ENCODE measurements at regions of chr10 and their contacts with region 1.

Region 1: GRCh38 chr10:50452603-50453002 is 171.2 kb downstream of the SGMS1 start:
- DNase-seq: no peak
- ATAC-seq: peak; percentile 57
- H3K4me3 ChIP-seq: peak overlapping the region; percentile 7; the same call in 1 of the 2 replicates
- H3K27ac ChIP-seq: peak overlapping the region; percentile 77
- H3K4me1 ChIP-seq: peaks cover 42% of the 10 kb centered on the region
- H3K27me3 ChIP-seq: no peaks in the 10 kb centered on the region
- CTCF ChIP-seq: no peak
- EP300 ChIP-seq: peak; percentile 65 to 67; a peak in 2 of 4 replicates
- POLR2A ChIP-seq: no peak
- RAD21 ChIP-seq: no peak

Region 2: DNA sequence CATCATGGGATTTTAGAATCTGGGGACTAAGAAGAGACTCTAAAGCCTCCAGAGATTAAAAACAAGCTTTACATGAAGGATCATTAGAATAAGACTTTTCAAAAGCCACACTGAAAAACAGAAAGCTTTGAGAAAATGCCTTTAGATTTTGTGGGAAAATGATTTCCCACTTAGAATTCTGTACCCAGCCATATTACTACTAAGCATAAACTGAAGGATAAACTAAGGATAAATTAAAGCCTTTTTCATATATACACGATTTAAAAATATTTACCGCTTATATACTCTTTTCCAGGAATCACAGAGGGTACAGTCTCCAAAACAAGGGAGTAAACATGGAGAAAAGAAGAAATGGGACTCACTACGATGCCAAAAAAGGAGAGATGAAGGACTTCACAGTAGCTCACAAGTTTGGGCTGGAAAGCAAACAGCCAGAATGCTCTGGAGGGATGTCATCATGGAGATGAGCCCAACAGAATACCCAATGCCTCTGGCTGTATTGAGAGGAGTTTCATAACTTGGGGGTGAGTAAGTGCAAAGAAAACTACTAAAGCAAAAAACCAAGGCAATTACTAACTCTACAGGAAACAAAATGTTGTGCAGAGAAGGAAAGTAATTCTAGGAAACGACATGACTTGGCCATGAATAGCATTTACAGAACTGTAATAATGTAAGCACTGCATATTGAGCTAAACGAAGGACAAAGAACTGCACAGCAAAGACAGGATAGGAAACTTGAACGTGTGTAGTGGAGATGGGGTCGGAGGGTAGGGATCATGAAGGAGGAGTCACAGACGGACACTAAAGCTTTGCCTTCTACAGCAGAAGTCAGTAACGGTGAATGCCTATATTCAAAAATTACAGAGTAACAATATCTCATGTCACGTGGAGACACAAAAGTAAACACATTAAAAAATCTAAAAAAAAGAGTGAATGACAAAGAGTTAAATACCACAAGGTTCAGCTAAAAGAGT is 139.9 kb before region 1 on chr10:
- CTCF ChIA-PET with region 1: no interaction called
- POLR2A ChIA-PET with region 1: no interaction called
- RAD21 ChIA-PET with region 1: no interaction called
- SMC1A ChIA-PET with region 1: no interaction called
- in situ Hi-C with region 1: no loop called
- intact Hi-C with region 1: no loop called
- DNase-seq: no peak
- ATAC-seq: no peak
- H3K4me3 ChIP-seq: no peak overlapping the region
- H3K27ac ChIP-seq: no peak overlapping the region
- H3K4me1 ChIP-seq: peaks cover 6% of the 10 kb centered on the region; the same call in 1 of the 2 replicates
- H3K27me3 ChIP-seq: no peaks in the 10 kb centered on the region
- CTCF ChIP-seq: no peak
- EP300 ChIP-seq: no peak
- POLR2A ChIP-seq: no peak
- RAD21 ChIP-seq: no peak

Region 3: DNA sequence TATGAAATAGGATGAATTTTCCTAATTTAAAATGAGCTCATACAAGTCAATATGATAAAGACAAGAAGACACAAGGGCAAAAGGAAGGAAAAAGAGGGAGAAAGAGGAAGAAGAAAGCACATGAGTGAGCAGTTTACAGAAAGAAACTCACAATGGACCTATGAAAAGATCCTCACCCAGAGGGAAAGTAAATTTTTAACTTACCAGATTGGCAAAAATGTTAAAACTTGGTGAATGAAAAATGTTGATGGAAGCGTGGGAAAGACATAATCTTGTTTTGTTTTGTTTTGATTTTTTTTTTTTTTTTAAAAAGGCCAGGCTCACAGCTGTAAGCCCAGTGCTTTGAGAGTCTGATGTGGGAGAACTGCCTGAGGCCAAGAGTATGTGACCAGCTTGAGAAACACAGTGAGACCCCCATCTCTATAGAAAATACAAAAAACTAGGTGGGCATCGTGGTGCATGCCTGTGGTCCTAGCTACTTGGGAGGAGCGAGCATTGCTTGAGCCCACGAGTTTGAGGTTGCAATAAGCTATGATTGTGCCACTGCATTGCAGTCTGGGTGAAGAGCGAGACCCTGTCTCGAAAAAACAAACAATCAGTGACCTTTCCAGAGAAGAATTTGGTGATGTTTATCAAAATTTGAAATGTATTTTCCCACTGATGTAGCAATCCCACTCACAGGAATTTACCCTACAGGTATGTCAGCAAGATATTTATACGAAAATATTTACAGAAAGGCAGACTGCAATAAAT is 48.4 kb before region 1 on chr10:
- CTCF ChIA-PET with region 1: no interaction called
- POLR2A ChIA-PET with region 1: no interaction called
- RAD21 ChIA-PET with region 1: no interaction called
- SMC1A ChIA-PET with region 1: no interaction called
- in situ Hi-C with region 1: no loop called
- intact Hi-C with region 1: no loop called
- DNase-seq: no peak
- ATAC-seq: no peak
- H3K4me3 ChIP-seq: no peak overlapping the region
- H3K27ac ChIP-seq: no peak overlapping the region
- H3K4me1 ChIP-seq: no peaks in the 10 kb centered on the region
- H3K27me3 ChIP-seq: no peaks in the 10 kb centered on the region
- CTCF ChIP-seq: no peak
- EP300 ChIP-seq: no peak
- POLR2A ChIP-seq: no peak
- RAD21 ChIP-seq: no peak

Region 4: GRCh38 chr10:50431791-50432190 is 20.8 kb before region 1 on chr10:
- CTCF ChIA-PET with region 1: interaction called, 5 read pairs
- POLR2A ChIA-PET with region 1: interaction called, 8 read pairs
- RAD21 ChIA-PET with region 1: interaction called, 15 read pairs
- SMC1A ChIA-PET with region 1: interaction called, 58 read pairs
- in situ Hi-C with region 1: no loop called
- intact Hi-C with region 1: loop called (anchors 2 kb)
- DNase-seq: peak; percentile 96
- ATAC-seq: peak; percentile 89
- H3K4me3 ChIP-seq: peak overlapping the region; percentile 45; the same call in 1 of the 2 replicates
- H3K27ac ChIP-seq: peak overlapping the region; percentile 80; the same call in 1 of the 2 replicates
- H3K4me1 ChIP-seq: peaks cover 25% of the 10 kb centered on the region
- H3K27me3 ChIP-seq: no peaks in the 10 kb centered on the region
- CTCF ChIP-seq: no peak
- EP300 ChIP-seq: peak; percentile 99
- POLR2A ChIP-seq: no peak
- RAD21 ChIP-seq: no peak; the same call in 1 of the 2 replicates

Region 5: DNA sequence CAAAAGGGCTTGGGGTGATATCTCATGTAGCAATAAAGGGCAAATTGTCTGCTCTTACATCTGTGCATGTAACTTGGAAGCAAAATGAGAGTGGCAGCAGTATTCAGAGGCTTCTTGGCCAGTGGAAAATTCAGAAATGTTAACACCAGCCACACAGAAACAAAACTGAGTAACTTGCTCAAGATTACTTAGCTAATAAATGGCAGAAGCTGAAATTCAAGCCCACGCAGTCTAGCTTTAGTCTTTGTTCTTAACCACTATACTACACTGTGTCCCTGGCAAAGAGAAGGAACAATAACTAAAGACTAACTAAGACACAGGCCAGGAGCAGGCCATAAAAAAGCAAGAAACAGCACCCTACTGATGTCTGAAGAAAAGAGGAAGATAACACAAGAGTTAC is 15.4 kb before region 1 on chr10:
- CTCF ChIA-PET with region 1: interaction called, 5 read pairs
- POLR2A ChIA-PET with region 1: interaction called, 8 read pairs
- RAD21 ChIA-PET with region 1: interaction called, 15 read pairs
- SMC1A ChIA-PET with region 1: interaction called, 58 read pairs
- in situ Hi-C with region 1: no loop called
- intact Hi-C with region 1: loop called (anchors 2 kb)
- DNase-seq: no peak
- ATAC-seq: peak; percentile 32
- H3K4me3 ChIP-seq: no peak overlapping the region
- H3K27ac ChIP-seq: no peak overlapping the region
- H3K4me1 ChIP-seq: peaks cover 18% of the 10 kb centered on the region
- H3K27me3 ChIP-seq: no peaks in the 10 kb centered on the region
- CTCF ChIP-seq: no peak
- EP300 ChIP-seq: no peak
- POLR2A ChIP-seq: no peak
- RAD21 ChIP-seq: no peak

Region 6: DNA sequence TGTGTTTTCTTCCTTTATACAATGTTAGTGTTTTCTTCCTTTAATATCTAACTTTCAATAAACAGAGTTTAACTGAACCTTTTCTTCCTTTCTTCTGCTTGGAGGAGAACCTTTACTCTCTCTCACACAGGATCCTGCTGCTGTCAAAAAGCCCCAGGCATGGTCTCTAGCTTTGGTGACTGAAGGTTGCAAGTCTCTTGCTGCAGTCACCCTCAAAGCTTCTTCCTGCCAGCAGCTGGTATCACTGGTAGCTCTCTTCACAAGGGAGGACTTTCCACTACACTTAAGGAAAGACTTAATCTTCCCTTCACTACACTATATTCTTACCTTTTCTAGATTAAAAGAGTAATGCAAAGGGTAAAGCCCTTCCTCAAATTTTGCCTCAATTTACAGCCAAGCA is 17.7 kb after region 1 on chr10:
- CTCF ChIA-PET with region 1: interaction called, 5 read pairs
- POLR2A ChIA-PET with region 1: interaction called, 8 read pairs
- RAD21 ChIA-PET with region 1: interaction called, 8 read pairs
- SMC1A ChIA-PET with region 1: interaction called, 34 read pairs
- in situ Hi-C with region 1: no loop called
- intact Hi-C with region 1: no loop called
- DNase-seq: no peak
- ATAC-seq: peak; percentile 75
- H3K4me3 ChIP-seq: no peak overlapping the region
- H3K27ac ChIP-seq: peak overlapping the region; percentile 51
- H3K4me1 ChIP-seq: peaks cover 45% of the 10 kb centered on the region
- H3K27me3 ChIP-seq: no peaks in the 10 kb centered on the region
- CTCF ChIP-seq: no peak
- EP300 ChIP-seq: no peak
- POLR2A ChIP-seq: no peak
- RAD21 ChIP-seq: no peak